GM23248 (cell line): ENCODE measurements at regions of chr11 and their contacts with region 1.

Region 1: DNA sequence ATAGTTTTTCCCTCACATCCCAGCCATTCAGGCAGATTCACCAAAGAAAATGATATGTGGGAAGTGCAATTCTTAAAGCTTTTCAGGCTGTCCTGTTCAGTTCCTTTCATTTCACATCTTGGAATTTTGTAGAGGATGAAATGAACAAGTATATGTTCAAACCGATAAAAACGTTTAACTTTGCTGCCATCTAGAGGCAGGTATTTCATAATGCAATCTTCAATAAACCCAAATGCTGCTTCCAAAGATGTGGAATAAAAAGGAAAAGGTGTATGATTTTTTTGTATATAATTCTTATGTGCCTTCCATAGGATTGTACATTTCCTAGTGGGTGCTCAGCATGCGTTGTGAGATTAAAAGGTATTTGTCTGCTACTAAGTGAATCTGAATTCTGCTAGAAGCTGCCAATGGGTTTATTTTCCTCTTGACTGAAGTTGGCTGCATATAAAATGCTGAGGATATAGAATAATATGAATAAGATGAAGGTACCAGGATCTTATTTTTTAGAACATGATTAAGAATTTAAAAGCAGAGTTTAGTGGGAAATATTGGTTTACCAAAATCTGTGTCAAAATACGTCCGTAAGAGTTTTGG is 199.3 kb downstream of the PGR start:
- DNase-seq: peak; percentile 69
- H3K4me3 ChIP-seq: no peak overlapping the region
- H3K27ac ChIP-seq: no peak overlapping the region
- H3K4me1 ChIP-seq: peaks cover 26% of the 10 kb centered on the region
- H3K27me3 ChIP-seq: no peaks in the 10 kb centered on the region

Region 2: GRCh38 chr11:100575870-100576705 is 354.2 kb before region 1 on chr11:
- in situ Hi-C with region 1: loop called (anchors 5 kb)
- DNase-seq: peak; percentile 69
- H3K4me3 ChIP-seq: no peak overlapping the region
- H3K27ac ChIP-seq: no peak overlapping the region
- H3K4me1 ChIP-seq: no peaks in the 10 kb centered on the region
- H3K27me3 ChIP-seq: 0 out of 2 replicates have a peak, but pooled peaks cover 11% of the 10 kb centered on the region

Region 3: DNA sequence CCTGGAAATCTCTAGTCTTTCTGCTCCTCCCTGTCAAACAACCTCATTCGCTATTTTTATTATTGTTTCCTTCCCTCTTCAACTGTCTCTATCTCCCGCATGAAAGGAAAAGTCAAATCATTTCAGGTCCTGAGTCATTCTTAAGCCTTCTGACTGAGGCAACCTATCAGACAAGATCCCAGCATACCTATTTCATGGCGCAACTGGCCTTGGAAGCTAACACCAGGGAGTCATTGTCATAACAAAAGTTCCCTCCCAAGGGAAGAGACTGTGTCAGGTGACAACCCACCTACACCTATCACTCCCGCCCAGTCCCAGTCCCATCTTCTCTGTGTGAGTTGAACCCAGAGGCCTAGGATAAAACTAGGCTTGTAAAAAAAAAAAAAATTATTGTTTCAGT is 253.4 kb before region 1 on chr11:
- in situ Hi-C with region 1: loop called (anchors 5 kb)
- DNase-seq: no peak
- H3K4me3 ChIP-seq: no peak overlapping the region
- H3K27ac ChIP-seq: no peak overlapping the region
- H3K4me1 ChIP-seq: no peaks in the 10 kb centered on the region
- H3K27me3 ChIP-seq: 0 out of 2 replicates have a peak, but pooled peaks cover 4% of the 10 kb centered on the region